Left ventricle myocardium inferior (tissue), 1 donor: ENCODE measurements at regions of chr2 and their contacts with region 1.

Region 1: DNA sequence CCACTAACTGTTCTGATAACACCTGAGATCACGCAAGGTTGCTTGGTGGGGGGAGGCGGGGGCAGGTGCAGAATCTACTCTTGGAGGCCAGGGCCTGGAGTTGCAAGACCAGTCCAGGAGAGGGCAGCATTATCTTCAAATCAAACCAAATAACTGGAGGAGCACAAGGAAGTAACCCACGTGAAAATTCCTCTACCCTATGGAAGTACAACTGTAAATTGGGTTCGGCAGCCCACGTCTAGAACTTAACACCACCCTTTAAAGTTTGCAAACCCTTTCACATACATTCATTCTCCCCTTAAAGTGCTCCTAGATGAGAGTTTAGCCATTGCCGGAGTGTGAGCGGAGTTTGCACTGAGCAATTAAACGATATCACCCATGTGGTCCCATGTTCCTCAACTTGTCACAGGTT is 19.6 kb upstream of the CXCR1 start:
- DNase-seq: peak; percentile 45
- H3K4me3 ChIP-seq: no peak overlapping the region
- H3K27ac ChIP-seq: no peak overlapping the region
- H3K4me1 ChIP-seq: peaks cover 10% of the 10 kb centered on the region
- H3K27me3 ChIP-seq: peaks cover 5% of the 10 kb centered on the region
- CTCF ChIP-seq: peak; percentile 86

Region 2: DNA sequence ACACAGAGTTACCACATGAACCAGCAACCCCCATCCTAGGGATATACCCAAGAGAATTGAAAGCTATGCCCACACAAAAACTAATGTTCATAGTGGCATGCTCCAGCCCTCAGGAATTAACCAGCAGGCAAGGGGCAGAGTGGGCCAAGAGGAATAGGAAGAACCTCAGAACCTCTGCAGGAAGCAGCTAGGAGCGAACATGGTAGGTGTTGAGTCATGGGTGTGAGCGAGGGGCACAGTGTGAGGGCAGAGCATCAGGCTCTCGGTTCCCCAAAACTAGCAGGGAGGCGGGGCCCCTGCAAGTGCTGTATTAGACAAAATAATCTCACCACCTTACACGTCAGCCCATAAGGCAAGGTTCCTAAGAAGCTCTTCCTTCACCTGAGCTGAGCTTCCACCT is 122.9 kb before region 1 on chr2:
- intact Hi-C with region 1: no loop called
- DNase-seq: no peak
- H3K4me3 ChIP-seq: no peak overlapping the region
- H3K27ac ChIP-seq: no peak overlapping the region
- H3K4me1 ChIP-seq: peaks cover 2% of the 10 kb centered on the region
- H3K27me3 ChIP-seq: peaks cover 50% of the 10 kb centered on the region
- CTCF ChIP-seq: no peak

Region 3: DNA sequence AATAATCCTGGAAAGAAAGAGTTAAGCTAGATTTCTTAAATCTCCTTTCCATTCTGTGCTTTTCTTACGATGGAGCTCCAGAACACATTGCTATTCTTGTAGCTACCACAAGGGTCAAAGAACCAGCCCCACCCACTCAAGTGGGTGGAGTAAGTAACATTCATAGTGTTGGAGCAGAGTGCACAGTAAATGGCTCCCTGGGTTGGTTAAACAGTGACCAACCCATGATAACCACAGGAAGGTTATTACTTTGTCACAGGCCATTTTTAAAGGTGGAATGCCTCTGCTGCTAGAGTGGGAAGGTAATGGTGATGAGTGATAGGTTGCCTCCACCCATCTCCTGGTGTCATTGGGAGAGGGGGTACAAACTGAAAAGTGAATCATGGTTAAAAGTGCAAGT is 44.5 kb after region 1 on chr2:
- intact Hi-C with region 1: loop called (anchors 2 kb)
- DNase-seq: no peak
- H3K4me3 ChIP-seq: no peak overlapping the region
- H3K27ac ChIP-seq: no peak overlapping the region
- H3K4me1 ChIP-seq: peaks cover 49% of the 10 kb centered on the region
- H3K27me3 ChIP-seq: no peaks in the 10 kb centered on the region
- CTCF ChIP-seq: peak; percentile 28